ENCODE measurements at regions of chr13 and their contacts with region 1.

Region 1: GRCh38 chr13:43878892-43879754 is at the start of gene CCDC122:
- DNase-seq: peak; percentile 72 to 85 (median 80)
- H3K4me3 ChIP-seq: peak within 1 kb of the TSS; percentile 20 to 61
- H3K4me3 Mint-ChIP-seq: peak within 1 kb of the TSS; percentile 89 to 98 (median 93)
- H3K27ac ChIP-seq: peak within 1 kb of the TSS; percentile 72
- H3K27ac Mint-ChIP-seq: peak within 1 kb of the TSS; percentile 86 to 97 (median 93)
- H3K4me1 ChIP-seq: peaks cover 12% of the 10 kb centered on the region
- H3K4me1 Mint-ChIP-seq: peaks cover 19 to 32% (median 26%) of the 10 kb centered on the region in 4 donors
- H3K27me3 ChIP-seq: no peaks in the 10 kb centered on the region
- H3K27me3 Mint-ChIP-seq: peaks cover 0 to 1% of the 10 kb centered on the region in 2 donors
- total RNA-seq, gene CCDC122: 4.0 to 4.7 TPM

Region 2: GRCh38 chr13:42969558-42970172 is 909.5 kb before region 1 on chr13:
- CTCF ChIA-PET with region 1: interaction called, 10 read pairs
- POLR2A ChIA-PET with region 1: interaction called, 3 read pairs
- intact Hi-C with region 1: loop called (anchors 1 kb)
- DNase-seq: peak; percentile 73 to 77 (median 75)
- H3K4me3 ChIP-seq: no peak overlapping the region
- H3K4me3 Mint-ChIP-seq: peak overlapping the region in 1 of 8 donors; percentile 34
- H3K27ac ChIP-seq: no peak overlapping the region
- H3K27ac Mint-ChIP-seq: peak overlapping the region in 5 of 7 donors; percentile 0 to 77 (median 16)
- H3K4me1 ChIP-seq: peaks cover 26% of the 10 kb centered on the region
- H3K4me1 Mint-ChIP-seq: peaks cover 15 to 28% (median 21%) of the 10 kb centered on the region in 4 donors
- H3K27me3 ChIP-seq: no peaks in the 10 kb centered on the region
- H3K27me3 Mint-ChIP-seq: no peaks in the 10 kb centered on the region

Region 3: DNA sequence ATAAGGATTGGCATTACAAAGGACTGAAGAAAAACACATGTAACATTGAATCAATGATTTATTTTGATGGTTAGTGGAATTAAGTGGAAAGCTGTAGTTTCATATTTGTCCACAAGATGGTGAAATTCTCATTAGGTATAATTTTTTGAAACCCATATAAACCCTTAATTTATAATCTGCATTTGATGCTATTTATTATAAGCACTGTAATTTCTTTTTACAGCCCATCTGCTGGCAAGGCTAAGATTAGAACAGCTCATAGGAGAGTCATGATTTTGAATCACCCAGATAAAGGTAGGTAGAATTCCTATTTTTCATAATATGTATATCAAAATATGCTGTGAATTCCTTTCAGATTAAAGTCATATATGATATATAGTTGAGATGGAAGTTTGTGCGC is 793.6 kb before region 1 on chr13:
- CTCF ChIA-PET with region 1: no interaction called
- POLR2A ChIA-PET with region 1: no interaction called
- intact Hi-C with region 1: loop called (anchors 1 kb)
- DNase-seq: peak in 3 of 5 donors; percentile 6 to 23 (median 22)
- H3K4me3 ChIP-seq: no peak overlapping the region
- H3K4me3 Mint-ChIP-seq: no peak overlapping the region
- H3K27ac ChIP-seq: no peak overlapping the region
- H3K27ac Mint-ChIP-seq: no peak overlapping the region
- H3K4me1 ChIP-seq: no peaks in the 10 kb centered on the region
- H3K4me1 Mint-ChIP-seq: peaks cover 0 to 18% (median 7%) of the 10 kb centered on the region in 4 donors
- H3K27me3 ChIP-seq: no peaks in the 10 kb centered on the region
- H3K27me3 Mint-ChIP-seq: no peaks in the 10 kb centered on the region

Region 4: GRCh38 chr13:44141725-44142539 is 262.8 kb after region 1 on chr13:
- CTCF ChIA-PET with region 1: no interaction called
- POLR2A ChIA-PET with region 1: no interaction called
- intact Hi-C with region 1: loop called (anchors 5 kb)
- DNase-seq: peak; percentile 87 to 94 (median 89)
- H3K4me3 ChIP-seq: peak overlapping the region; percentile 59 to 79
- H3K4me3 Mint-ChIP-seq: peak overlapping the region; percentile 90 to 98 (median 94)
- H3K27ac ChIP-seq: peak overlapping the region; percentile 83
- H3K27ac Mint-ChIP-seq: peak overlapping the region; percentile 76 to 97 (median 96)
- H3K4me1 ChIP-seq: peaks cover 14% of the 10 kb centered on the region
- H3K4me1 Mint-ChIP-seq: peaks cover 9 to 16% (median 13%) of the 10 kb centered on the region in 4 donors
- H3K27me3 ChIP-seq: no peaks in the 10 kb centered on the region
- H3K27me3 Mint-ChIP-seq: peaks cover 5 to 7% of the 10 kb centered on the region in 2 donors

Region 5: GRCh38 chr13:44435142-44435982 is 556.2 kb after region 1 on chr13:
- CTCF ChIA-PET with region 1: interaction called, 4 read pairs
- POLR2A ChIA-PET with region 1: interaction called, 3 read pairs
- intact Hi-C with region 1: loop called (anchors 1 kb)
- DNase-seq: peak; percentile 77 to 96 (median 82)
- H3K4me3 ChIP-seq: peak overlapping the region; percentile 54 to 63
- H3K4me3 Mint-ChIP-seq: peak overlapping the region; percentile 87 to 93 (median 90)
- H3K27ac ChIP-seq: peak overlapping the region; percentile 23
- H3K27ac Mint-ChIP-seq: peak overlapping the region; percentile 44 to 92 (median 89)
- H3K4me1 ChIP-seq: peaks cover 30% of the 10 kb centered on the region
- H3K4me1 Mint-ChIP-seq: peaks cover 15 to 35% (median 22%) of the 10 kb centered on the region in 4 donors
- H3K27me3 ChIP-seq: peaks cover 14% of the 10 kb centered on the region
- H3K27me3 Mint-ChIP-seq: peaks cover 6 to 9% of the 10 kb centered on the region in 2 donors

Measured in CD4-positive, alpha-beta memory T cell (primary cell).